ENCODE measurements at regions of chr3 and their contacts with region 1.

Region 1: GRCh38 chr3:13895155-13896105 is 15.6 kb upstream of the WNT7A start:
- DNase-seq: peak; percentile 65
- H3K4me3 ChIP-seq: peak overlapping the region; percentile 63
- H3K27me3 ChIP-seq: no peaks in the 10 kb centered on the region; the same call in 1 of the 2 replicates
- CTCF ChIP-seq: no peak

Region 2: GRCh38 chr3:13874891-13875290 is 20.5 kb before region 1 on chr3:
- CTCF ChIA-PET with region 1: no interaction called
- POLR2A ChIA-PET with region 1: no interaction called
- DNase-seq: no peak
- H3K4me3 ChIP-seq: no peak overlapping the region
- H3K27me3 ChIP-seq: peaks cover 26% of the 10 kb centered on the region
- CTCF ChIP-seq: no peak

Region 3: GRCh38 chr3:14113965-14114635 is 218.7 kb after region 1 on chr3:
- CTCF ChIA-PET with region 1: interaction called, 16 read pairs
- POLR2A ChIA-PET with region 1: no interaction called
- DNase-seq: no peak
- H3K4me3 ChIP-seq: no peak overlapping the region
- H3K27me3 ChIP-seq: no peaks in the 10 kb centered on the region
- CTCF ChIP-seq: no peak